CD4-positive, alpha-beta T cell (primary cell): ENCODE measurements at regions of chr11 and their contacts with region 1.

Region 1: GRCh38 chr11:85826116-85826855 is 15.3 kb upstream of the SYTL2 start:
- DNase-seq: peak in 4 of 14 experiments; percentile 26 to 53 (median 48)
- ATAC-seq: no peak
- H3K4me3 ChIP-seq: no peak overlapping the region
- H3K4me3 Mint-ChIP-seq: peak overlapping the region; percentile 22
- H3K27ac ChIP-seq: peak overlapping the region in 1 of 2 donors; percentile 49
- H3K27ac Mint-ChIP-seq: peak overlapping the region; percentile 86
- H3K4me1 ChIP-seq: peaks cover 59% of the 10 kb centered on the region
- H3K4me1 Mint-ChIP-seq: peaks cover 65% of the 10 kb centered on the region
- H3K27me3 ChIP-seq: no peaks in the 10 kb centered on the region
- H3K27me3 Mint-ChIP-seq: no peaks in the 10 kb centered on the region
- CTCF ChIP-seq: peak; percentile 33

Region 2: GRCh38 chr11:85495918-85496317 is 330.4 kb before region 1 on chr11:
- CTCF ChIA-PET with region 1: no interaction called
- POLR2A ChIA-PET with region 1: no interaction called
- intact Hi-C with region 1: no loop called
- DNase-seq: no peak
- ATAC-seq: no peak
- H3K4me3 ChIP-seq: no peak overlapping the region
- H3K4me3 Mint-ChIP-seq: no peak overlapping the region
- H3K27ac ChIP-seq: no peak overlapping the region
- H3K27ac Mint-ChIP-seq: no peak overlapping the region
- H3K4me1 ChIP-seq: no peaks in the 10 kb centered on the region
- H3K4me1 Mint-ChIP-seq: no peaks in the 10 kb centered on the region
- H3K27me3 ChIP-seq: no peaks in the 10 kb centered on the region
- H3K27me3 Mint-ChIP-seq: no peaks in the 10 kb centered on the region
- CTCF ChIP-seq: no peak

Region 3: GRCh38 chr11:85694386-85694980 is 131.8 kb before region 1 on chr11:
- CTCF ChIA-PET with region 1: interaction called, 4 read pairs
- POLR2A ChIA-PET with region 1: interaction called, 14 read pairs
- intact Hi-C with region 1: loop called (anchors 1 to 5 kb)
- DNase-seq: peak in 7 of 14 experiments; percentile 6 to 71 (median 45)
- ATAC-seq: peak; percentile 69
- H3K4me3 ChIP-seq: no peak overlapping the region
- H3K4me3 Mint-ChIP-seq: no peak overlapping the region
- H3K27ac ChIP-seq: no peak overlapping the region
- H3K27ac Mint-ChIP-seq: no peak overlapping the region
- H3K4me1 ChIP-seq: peaks cover 2% of the 10 kb centered on the region
- H3K4me1 Mint-ChIP-seq: peaks cover 12% of the 10 kb centered on the region
- H3K27me3 ChIP-seq: no peaks in the 10 kb centered on the region
- H3K27me3 Mint-ChIP-seq: no peaks in the 10 kb centered on the region
- CTCF ChIP-seq: peak; percentile 82

Region 4: DNA sequence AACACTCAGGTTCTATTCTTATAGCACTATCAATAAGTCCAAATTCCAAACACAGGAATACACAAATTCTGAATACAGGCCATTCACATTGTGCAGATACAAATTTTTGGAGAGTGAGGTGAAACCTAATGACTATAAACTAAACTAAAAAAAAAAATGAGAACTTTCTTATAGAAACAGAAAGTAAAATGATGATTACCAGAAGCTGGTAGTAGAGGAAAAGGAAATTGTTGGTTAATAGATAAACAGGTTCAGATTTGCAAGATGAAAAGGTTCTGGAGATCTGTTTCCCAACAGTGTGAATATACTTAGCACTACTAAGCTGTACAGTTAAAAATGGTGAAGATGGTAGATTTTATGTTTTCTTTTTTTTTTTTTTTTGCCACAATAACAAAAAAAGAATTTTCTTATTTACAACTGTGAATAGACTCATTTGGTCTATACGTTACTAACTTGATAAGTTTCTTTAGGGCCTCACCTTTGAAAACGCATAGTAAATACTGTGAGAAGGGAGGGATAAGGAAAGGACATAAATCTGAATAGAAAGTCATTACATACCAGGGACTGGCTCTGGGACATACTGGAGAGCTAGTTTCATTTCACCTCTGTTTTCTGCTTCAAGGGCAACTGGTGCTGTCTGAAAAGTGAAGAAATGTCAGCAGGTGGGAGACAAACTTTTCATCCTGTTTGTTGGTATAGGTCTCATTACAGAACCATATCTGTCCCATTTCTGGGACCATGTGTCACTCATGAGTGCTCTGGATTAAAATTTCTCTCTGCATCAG is 126.1 kb before region 1 on chr11:
- CTCF ChIA-PET with region 1: interaction called, 3 read pairs
- POLR2A ChIA-PET with region 1: interaction called, 14 read pairs
- intact Hi-C with region 1: loop called in 1 of 2 experiments (anchors 5 kb)
- DNase-seq: peak in 3 of 14 experiments; percentile 11 to 68 (median 30)
- ATAC-seq: peak; percentile 71
- H3K4me3 ChIP-seq: no peak overlapping the region
- H3K4me3 Mint-ChIP-seq: peak overlapping the region; percentile 16
- H3K27ac ChIP-seq: no peak overlapping the region
- H3K27ac Mint-ChIP-seq: peak overlapping the region; percentile 47
- H3K4me1 ChIP-seq: peaks cover 8% of the 10 kb centered on the region
- H3K4me1 Mint-ChIP-seq: peaks cover 22% of the 10 kb centered on the region
- H3K27me3 ChIP-seq: no peaks in the 10 kb centered on the region
- H3K27me3 Mint-ChIP-seq: no peaks in the 10 kb centered on the region
- CTCF ChIP-seq: no peak

Region 5: DNA sequence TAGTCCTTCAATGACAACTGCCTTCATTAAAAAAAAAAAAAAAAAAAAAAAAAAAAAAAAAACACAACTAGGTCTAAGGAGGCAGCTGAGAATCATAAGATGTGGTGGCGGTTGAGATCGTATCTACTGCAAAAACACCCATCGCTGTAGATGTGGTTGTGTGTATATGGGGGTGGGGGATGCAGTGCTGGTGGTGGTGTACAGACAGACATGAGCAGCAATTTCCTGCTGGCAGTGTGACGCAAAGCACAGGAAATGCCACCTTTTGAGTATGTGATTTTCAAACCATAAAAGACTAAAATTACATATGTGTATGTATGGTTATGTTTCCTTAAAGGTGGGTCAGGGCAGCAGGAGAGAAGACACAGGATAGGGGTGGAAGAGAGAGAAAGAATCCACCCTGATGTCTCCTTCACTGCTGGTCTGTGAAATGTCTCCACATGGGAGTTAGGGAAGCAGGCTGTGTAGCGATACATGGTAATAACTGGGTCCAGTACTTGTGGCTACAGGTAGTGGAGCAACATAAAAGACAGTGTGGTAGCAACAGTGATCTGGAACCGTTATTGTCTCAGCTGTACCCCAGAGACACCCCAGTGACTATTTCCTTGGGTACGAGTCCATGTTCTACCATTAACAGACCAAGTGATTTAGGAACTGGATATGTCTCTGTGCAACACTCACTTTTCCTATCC is 73.2 kb before region 1 on chr11:
- CTCF ChIA-PET with region 1: interaction called, 9 read pairs
- POLR2A ChIA-PET with region 1: interaction called, 48 read pairs
- intact Hi-C with region 1: loop called (anchors 1 to 2 kb)
- DNase-seq: peak; percentile 70 to 99 (median 84)
- ATAC-seq: peak; percentile 84
- H3K4me3 ChIP-seq: peak overlapping the region; percentile 32
- H3K4me3 Mint-ChIP-seq: peak overlapping the region; percentile 87
- H3K27ac ChIP-seq: peak overlapping the region; percentile 52 to 66
- H3K27ac Mint-ChIP-seq: peak overlapping the region; percentile 91
- H3K4me1 ChIP-seq: peaks cover 77% of the 10 kb centered on the region
- H3K4me1 Mint-ChIP-seq: peaks cover 95% of the 10 kb centered on the region
- H3K27me3 ChIP-seq: no peaks in the 10 kb centered on the region
- H3K27me3 Mint-ChIP-seq: peaks cover 7% of the 10 kb centered on the region
- CTCF ChIP-seq: peak; percentile 22

Region 6: GRCh38 chr11:85759915-85760314 is 66.4 kb before region 1 on chr11:
- CTCF ChIA-PET with region 1: interaction called, 9 read pairs
- POLR2A ChIA-PET with region 1: interaction called, 10 read pairs
- intact Hi-C with region 1: no loop called
- DNase-seq: no peak
- ATAC-seq: no peak
- H3K4me3 ChIP-seq: no peak overlapping the region
- H3K4me3 Mint-ChIP-seq: no peak overlapping the region
- H3K27ac ChIP-seq: no peak overlapping the region
- H3K27ac Mint-ChIP-seq: no peak overlapping the region
- H3K4me1 ChIP-seq: peaks cover 41% of the 10 kb centered on the region
- H3K4me1 Mint-ChIP-seq: peaks cover 69% of the 10 kb centered on the region
- H3K27me3 ChIP-seq: no peaks in the 10 kb centered on the region
- H3K27me3 Mint-ChIP-seq: no peaks in the 10 kb centered on the region
- CTCF ChIP-seq: no peak

Region 7: GRCh38 chr11:85810871-85811611 is 15.2 kb before region 1 on chr11 and contains the start of gene SYTL2:
- CTCF ChIA-PET with region 1: interaction called, 7 read pairs
- POLR2A ChIA-PET with region 1: interaction called, 31 read pairs
- intact Hi-C with region 1: loop called in 1 of 2 experiments (anchors 1 kb)
- DNase-seq: peak; percentile 46 to 91 (median 69)
- ATAC-seq: peak; percentile 80
- H3K4me3 ChIP-seq: peak within 1 kb of the TSS; percentile 68
- H3K4me3 Mint-ChIP-seq: peak within 1 kb of the TSS; percentile 96
- H3K27ac ChIP-seq: peak within 1 kb of the TSS in 1 of 2 donors; percentile 43
- H3K27ac Mint-ChIP-seq: peak within 1 kb of the TSS; percentile 89
- H3K4me1 ChIP-seq: peaks cover 37% of the 10 kb centered on the region
- H3K4me1 Mint-ChIP-seq: peaks cover 48% of the 10 kb centered on the region
- H3K27me3 ChIP-seq: no peaks in the 10 kb centered on the region
- H3K27me3 Mint-ChIP-seq: no peaks in the 10 kb centered on the region
- CTCF ChIP-seq: no peak
- total RNA-seq, gene SYTL2: 35.4 to 36.7 TPM